ENCODE measurements at regions of chr10 and their contacts with region 1.

Region 1: GRCh38 chr10:91328320-91328984 is 81.7 kb upstream of the HECTD2 start:
- DNase-seq: no peak
- H3K4me3 ChIP-seq: no peak overlapping the region
- H3K27ac ChIP-seq: no peak overlapping the region
- H3K4me1 ChIP-seq: no peaks in the 10 kb centered on the region
- H3K27me3 ChIP-seq: no peaks in the 10 kb centered on the region
- CTCF ChIP-seq: no peak

Region 2: DNA sequence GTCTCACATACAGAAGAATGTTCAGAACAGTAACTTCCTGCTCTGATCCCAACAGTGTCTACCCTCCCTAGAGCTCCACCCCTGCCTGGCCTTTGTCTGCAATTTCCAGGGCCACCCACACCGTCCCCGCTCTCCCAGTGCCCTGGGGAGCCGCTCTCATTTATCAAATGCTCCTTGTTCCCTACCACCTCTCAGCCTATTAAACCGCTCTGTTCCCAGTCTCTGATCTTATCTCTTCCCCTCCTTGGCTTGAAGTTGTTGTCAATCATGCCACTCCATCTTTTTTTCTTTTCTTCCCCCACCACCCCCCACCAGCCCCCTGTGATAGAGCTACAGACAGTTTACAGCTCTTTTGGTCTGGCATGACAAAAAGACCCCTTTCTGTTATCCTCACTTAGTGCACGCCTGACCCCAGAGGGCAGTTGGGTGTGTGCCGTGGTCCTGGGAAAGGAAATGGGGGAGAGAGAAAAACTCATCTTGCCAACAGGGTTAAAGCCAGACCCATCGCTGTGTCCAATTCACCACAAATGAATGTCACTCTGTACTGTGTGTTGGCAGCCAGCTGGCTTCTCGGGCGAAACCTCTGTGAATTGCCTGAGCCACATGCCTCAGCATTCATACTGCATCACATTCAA is 52.9 kb after region 1 on chr10:
- CTCF ChIA-PET with region 1: no interaction called
- POLR2A ChIA-PET with region 1: no interaction called
- intact Hi-C with region 1: no loop called
- DNase-seq: peak; percentile 75
- H3K4me3 ChIP-seq: no peak overlapping the region
- H3K27ac ChIP-seq: no peak overlapping the region
- H3K4me1 ChIP-seq: peaks cover 11% of the 10 kb centered on the region
- H3K27me3 ChIP-seq: no peaks in the 10 kb centered on the region
- CTCF ChIP-seq: no peak

Region 3: GRCh38 chr10:91462423-91462822 is 134.0 kb after region 1 on chr10:
- CTCF ChIA-PET with region 1: no interaction called
- POLR2A ChIA-PET with region 1: no interaction called
- intact Hi-C with region 1: no loop called
- DNase-seq: no peak
- H3K4me3 ChIP-seq: no peak overlapping the region
- H3K27ac ChIP-seq: no peak overlapping the region
- H3K4me1 ChIP-seq: no peaks in the 10 kb centered on the region
- H3K27me3 ChIP-seq: no peaks in the 10 kb centered on the region
- CTCF ChIP-seq: no peak

Region 4: DNA sequence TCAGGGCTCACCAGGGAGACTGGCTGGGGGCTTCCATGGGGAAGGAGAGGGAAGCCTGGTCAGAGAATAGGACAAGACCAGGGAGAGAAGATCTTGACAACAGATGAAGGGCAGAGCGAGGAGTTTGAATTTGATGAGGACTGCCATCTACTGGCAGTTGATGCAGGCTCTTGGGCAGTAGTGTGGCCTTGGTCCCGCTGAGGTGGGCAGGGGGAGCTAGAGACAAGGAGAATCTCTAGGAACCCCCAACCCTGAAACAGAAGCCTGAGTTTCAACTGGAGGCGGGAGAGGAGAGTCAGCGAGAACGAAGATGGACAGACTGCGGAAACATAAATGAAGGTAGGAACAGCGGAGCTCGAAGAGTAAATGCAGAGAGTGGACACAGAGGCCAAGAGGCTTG is 223.4 kb after region 1 on chr10:
- CTCF ChIA-PET with region 1: no interaction called
- POLR2A ChIA-PET with region 1: no interaction called
- intact Hi-C with region 1: no loop called
- DNase-seq: peak; percentile 78
- H3K4me3 ChIP-seq: no peak overlapping the region
- H3K27ac ChIP-seq: no peak overlapping the region
- H3K4me1 ChIP-seq: peaks cover 3% of the 10 kb centered on the region
- H3K27me3 ChIP-seq: no peaks in the 10 kb centered on the region
- CTCF ChIP-seq: peak; percentile 94

Region 5: DNA sequence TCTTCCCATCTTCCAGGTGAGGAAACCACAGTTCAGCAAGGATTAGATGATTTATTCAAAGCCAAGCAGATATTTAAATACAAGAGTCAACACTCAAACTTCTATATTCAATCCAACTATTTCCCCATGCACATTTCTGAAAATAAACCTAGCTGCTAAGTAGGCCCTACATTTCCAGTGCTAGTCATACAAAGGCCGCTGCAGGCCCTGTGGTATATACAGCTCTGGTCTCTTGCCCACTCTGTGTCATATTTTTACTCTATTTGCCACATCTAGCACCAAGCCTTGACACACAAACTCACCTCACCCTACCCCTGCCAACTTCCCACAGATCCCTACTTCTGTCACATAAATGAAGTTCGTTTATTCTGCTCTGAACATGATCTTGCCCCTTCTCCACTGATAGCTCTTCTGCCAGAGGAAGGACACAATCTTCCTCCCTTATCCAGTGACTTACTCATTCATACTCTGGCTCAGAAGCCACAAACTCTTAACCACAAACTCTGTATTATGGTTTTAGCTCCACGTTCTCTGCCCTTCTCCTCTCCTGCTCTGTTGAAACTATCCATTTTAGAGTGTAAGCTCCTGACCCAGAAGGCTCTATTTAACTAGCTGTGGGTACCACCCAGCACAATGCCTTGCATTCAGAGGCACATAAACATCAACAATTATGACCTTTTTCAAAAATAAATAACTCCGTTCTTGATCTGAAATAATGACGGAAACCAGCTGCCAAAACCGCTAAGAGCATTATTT is 781.8 kb after region 1 on chr10:
- CTCF ChIA-PET with region 1: no interaction called
- POLR2A ChIA-PET with region 1: interaction called, 11 read pairs
- intact Hi-C with region 1: no loop called
- DNase-seq: no peak
- H3K4me3 ChIP-seq: no peak overlapping the region
- H3K27ac ChIP-seq: no peak overlapping the region
- H3K4me1 ChIP-seq: no peaks in the 10 kb centered on the region
- H3K27me3 ChIP-seq: no peaks in the 10 kb centered on the region
- CTCF ChIP-seq: no peak

Measured in A673 (cell line).